CD8-positive, alpha-beta memory T cell (primary cell): ENCODE measurements at regions of chr7 and their contacts with region 1.

Region 1: DNA sequence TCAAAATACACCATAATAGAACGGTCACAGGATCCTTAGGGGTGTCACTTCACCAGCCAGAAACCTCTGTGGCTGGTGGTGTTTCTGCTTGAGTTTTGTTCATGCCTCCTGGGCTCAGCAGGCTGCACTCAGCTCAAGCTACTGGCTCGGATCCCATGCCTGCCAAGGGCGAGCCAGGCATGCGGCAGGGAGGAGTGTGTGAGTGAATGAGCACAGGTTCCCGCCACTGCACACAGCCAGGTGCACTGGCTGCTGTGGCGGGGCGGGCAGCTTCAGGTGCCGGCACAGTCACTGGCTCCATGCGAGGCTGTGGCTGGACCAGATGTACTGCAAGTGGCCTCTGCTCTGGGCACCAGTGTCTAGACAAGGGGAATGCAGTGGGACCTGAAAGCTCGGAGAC is 29.5 kb downstream of the CLDN12 start:
- DNase-seq: no peak
- H3K4me3 ChIP-seq: no peak overlapping the region
- H3K4me3 Mint-ChIP-seq: no peak overlapping the region
- H3K27ac ChIP-seq: no peak overlapping the region
- H3K27ac Mint-ChIP-seq: no peak overlapping the region
- H3K4me1 ChIP-seq: no peaks in the 10 kb centered on the region
- H3K4me1 Mint-ChIP-seq: no peaks in the 10 kb centered on the region
- H3K27me3 ChIP-seq: no peaks in the 10 kb centered on the region
- H3K27me3 Mint-ChIP-seq: peaks cover 2 to 26% of the 10 kb centered on the region in 2 donors

Region 2: DNA sequence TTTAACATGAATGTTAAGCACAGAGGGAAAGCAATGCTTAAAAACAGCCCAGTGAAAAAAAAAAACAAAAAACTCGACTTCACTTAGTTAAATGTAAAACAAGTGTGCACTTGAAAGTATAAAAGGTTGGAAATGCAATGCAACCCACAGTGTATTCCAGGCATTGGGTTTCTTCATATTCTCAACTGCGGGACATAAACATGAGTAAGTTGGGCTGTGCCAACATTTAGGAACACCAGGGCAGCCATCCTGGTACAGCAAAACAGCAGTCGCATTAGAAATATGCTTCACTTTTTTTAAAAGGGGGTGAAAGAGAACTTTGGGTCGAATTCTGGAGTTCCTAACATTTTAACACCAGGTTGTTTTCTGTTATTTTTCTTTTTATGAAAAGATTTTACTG is 277.5 kb before region 1 on chr7:
- CTCF ChIA-PET with region 1: interaction called, 45 read pairs
- POLR2A ChIA-PET with region 1: no interaction called
- DNase-seq: no peak
- H3K4me3 ChIP-seq: no peak overlapping the region
- H3K4me3 Mint-ChIP-seq: no peak overlapping the region
- H3K27ac ChIP-seq: no peak overlapping the region
- H3K27ac Mint-ChIP-seq: no peak overlapping the region
- H3K4me1 ChIP-seq: no peaks in the 10 kb centered on the region
- H3K4me1 Mint-ChIP-seq: peaks cover 4 to 9% (median 4%) of the 10 kb centered on the region in 3 donors
- H3K27me3 ChIP-seq: no peaks in the 10 kb centered on the region
- H3K27me3 Mint-ChIP-seq: peaks cover 7 to 40% of the 10 kb centered on the region in 2 donors

Region 3: DNA sequence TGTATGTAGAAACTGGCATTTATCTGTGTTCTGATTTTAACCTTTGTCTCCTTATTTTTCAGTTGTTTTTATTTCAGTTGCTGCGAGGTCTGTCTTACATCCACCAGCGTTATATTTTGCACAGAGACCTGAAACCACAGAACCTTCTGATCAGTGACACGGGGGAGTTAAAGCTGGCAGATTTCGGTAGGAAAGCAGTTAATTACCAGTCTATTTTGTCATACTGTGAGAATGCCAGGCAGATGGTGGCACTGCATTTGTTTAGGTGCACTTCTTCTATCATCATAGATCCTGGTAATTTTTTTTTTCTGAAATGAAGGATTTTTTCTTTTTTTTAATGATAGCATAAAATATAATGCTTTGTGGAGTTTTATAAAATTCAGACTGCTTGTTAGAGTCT is 484.8 kb after region 1 on chr7:
- CTCF ChIA-PET with region 1: no interaction called
- POLR2A ChIA-PET with region 1: no interaction called
- DNase-seq: no peak
- H3K4me3 ChIP-seq: no peak overlapping the region
- H3K4me3 Mint-ChIP-seq: no peak overlapping the region
- H3K27ac ChIP-seq: no peak overlapping the region
- H3K27ac Mint-ChIP-seq: no peak overlapping the region
- H3K4me1 ChIP-seq: no peaks in the 10 kb centered on the region
- H3K4me1 Mint-ChIP-seq: no peaks in the 10 kb centered on the region
- H3K27me3 ChIP-seq: no peaks in the 10 kb centered on the region
- H3K27me3 Mint-ChIP-seq: no peaks in the 10 kb centered on the region